CD4-positive, alpha-beta T cell (primary cell): ENCODE measurements at regions of chr5 and their contacts with region 1.

Region 1: DNA sequence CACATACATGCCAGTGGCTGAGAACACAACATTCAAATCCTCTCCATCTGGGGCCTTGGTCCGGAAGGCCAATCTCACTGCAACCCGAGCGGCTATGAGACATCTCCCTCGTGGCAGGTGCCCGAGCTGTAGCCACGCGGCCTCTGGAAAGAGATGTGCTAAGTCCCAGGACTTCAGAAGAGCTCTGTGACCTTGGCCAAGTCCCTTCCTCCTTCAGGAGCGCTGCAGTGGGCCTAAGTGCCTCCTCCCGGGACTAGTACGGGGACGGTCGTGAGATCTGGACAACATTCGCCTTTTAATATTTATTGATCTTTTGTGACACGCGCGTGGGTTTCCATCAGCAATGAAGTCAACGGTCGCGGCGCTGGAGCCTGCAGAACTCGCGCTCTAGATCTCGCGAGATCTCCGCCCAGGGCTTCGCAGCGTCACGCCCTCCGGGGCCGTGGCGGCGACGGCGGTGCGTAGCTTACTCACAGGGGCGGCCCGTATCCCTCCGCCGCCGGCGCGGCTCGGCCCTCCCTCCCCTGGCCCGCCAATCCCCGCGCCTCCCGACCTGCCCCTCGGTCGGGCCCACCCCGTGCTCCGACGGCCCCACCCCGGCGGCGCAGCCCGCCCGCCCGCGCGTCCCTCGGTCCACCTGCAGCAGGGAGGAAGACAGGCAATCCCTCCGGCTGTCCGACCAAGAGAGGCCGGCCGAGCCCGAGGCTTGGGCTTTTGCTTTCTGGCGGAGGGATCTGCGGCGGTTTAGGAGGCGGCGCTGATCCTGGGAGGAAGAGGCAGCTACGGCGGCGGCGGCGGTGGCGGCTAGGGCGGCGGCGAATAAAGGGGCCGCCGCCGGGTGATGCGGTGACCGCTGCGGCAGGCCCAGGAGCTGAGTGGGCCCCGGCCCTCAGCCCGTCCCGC is at the start of gene UBE2D2:
- DNase-seq: peak; percentile 96 to 100 (median 98)
- ATAC-seq: peak; percentile 78
- H3K4me3 ChIP-seq: peak within 1 kb of the TSS; percentile 79
- H3K4me3 Mint-ChIP-seq: peak within 1 kb of the TSS; percentile 99
- H3K27ac ChIP-seq: peak within 1 kb of the TSS; percentile 85 to 88
- H3K27ac Mint-ChIP-seq: peak within 1 kb of the TSS; percentile 92
- H3K4me1 ChIP-seq: peaks cover 36% of the 10 kb centered on the region
- H3K4me1 Mint-ChIP-seq: peaks cover 44% of the 10 kb centered on the region
- H3K27me3 ChIP-seq: no peaks in the 10 kb centered on the region
- H3K27me3 Mint-ChIP-seq: no peaks in the 10 kb centered on the region
- CTCF ChIP-seq: no peak
- total RNA-seq, gene UBE2D2: 164 to 174 TPM

Region 2: DNA sequence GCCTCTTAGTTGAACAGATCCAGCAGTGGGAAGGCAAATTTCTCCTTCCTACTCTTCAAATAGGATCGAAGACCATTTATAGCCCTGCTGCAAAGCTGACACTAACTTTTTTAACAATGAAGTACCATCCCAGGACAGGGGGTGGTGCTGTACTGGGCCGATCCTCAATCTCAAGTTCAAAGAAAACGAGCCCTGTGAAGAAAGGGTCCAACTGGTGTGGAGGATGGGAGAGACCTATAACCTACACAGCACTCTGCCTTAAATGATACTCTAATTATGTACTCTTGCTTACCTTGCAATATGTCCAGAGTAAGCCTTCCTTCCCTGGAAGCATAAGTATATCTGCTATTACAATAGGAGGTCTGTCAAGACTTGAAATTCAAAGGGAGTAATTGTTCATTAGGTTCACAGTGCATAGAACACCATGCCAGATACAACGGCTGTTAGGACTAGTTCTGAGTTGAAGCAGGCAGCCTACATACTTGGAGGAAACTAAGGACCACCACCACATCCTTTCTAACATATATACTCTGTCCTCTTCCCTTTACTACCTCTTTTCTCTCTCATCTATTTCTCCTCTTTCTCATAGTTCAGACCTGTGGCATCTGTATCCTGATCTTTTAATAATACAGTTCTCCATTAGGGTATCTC is 1024.2 kb before region 1 on chr5:
- CTCF ChIA-PET with region 1: no interaction called
- POLR2A ChIA-PET with region 1: no interaction called
- intact Hi-C with region 1: no loop called
- DNase-seq: peak in 3 of 14 experiments; percentile 23 to 54 (median 45)
- ATAC-seq: peak; percentile 82
- H3K4me3 ChIP-seq: no peak overlapping the region
- H3K4me3 Mint-ChIP-seq: no peak overlapping the region
- H3K27ac ChIP-seq: no peak overlapping the region
- H3K27ac Mint-ChIP-seq: peak overlapping the region; percentile 5
- H3K4me1 ChIP-seq: peaks cover 12% of the 10 kb centered on the region
- H3K4me1 Mint-ChIP-seq: peaks cover 82% of the 10 kb centered on the region
- H3K27me3 ChIP-seq: no peaks in the 10 kb centered on the region
- H3K27me3 Mint-ChIP-seq: no peaks in the 10 kb centered on the region
- CTCF ChIP-seq: no peak

Region 3: DNA sequence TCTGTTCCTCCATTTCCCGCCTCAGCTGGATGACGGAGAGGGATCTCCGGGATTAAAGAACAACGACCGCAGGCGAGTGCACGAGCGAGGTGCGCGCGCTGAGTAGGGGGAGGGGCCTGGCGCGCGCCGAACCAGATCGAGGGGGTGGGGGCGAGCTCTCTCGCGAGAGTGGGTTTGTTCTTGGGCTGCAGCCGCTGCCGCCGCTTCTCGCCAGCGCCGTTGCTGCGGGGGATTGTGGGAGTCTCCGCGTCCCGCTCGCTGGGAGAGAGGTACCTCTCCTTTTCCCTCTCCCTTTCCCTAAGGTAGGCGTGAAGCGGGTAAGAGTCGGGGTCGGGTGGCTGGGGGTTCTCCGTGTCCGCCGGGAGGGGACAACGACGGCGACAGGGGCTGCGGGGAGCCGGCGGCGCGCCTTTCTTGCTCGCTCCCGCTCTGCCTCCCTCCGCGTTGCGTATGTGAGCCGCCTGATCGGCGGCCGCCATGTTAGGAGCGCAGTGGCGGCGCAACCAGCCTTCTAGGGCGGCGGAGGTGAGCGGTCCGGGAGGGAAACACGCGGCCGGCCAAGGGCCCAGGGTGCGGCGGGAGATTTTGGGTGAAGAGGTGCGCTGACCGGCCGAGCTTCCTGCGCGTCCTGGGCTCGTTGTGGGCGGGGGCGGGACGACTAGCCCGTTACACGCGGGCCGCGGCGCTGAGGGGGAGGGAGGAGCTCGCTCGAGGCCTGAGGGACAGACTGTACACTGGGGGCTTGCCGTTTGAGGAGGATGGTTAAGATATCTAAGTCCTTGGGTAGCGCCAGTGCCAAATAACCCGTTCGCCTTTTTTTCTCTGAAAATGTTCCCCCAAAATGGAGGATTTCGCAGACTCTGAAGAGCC is 267.3 kb before region 1 on chr5 and contains the start of gene MATR3:
- CTCF ChIA-PET with region 1: no interaction called
- POLR2A ChIA-PET with region 1: interaction called, 7 read pairs
- intact Hi-C with region 1: loop called in 1 of 2 experiments (anchors 5 kb)
- DNase-seq: peak; percentile 88 to 96 (median 92)
- ATAC-seq: peak; percentile 89
- H3K4me3 ChIP-seq: peak within 1 kb of the TSS; percentile 95
- H3K4me3 Mint-ChIP-seq: peak within 1 kb of the TSS; percentile 99
- H3K27ac ChIP-seq: peak within 1 kb of the TSS; percentile 98 to 100
- H3K27ac Mint-ChIP-seq: peak within 1 kb of the TSS; percentile 99
- H3K4me1 ChIP-seq: peaks cover 27% of the 10 kb centered on the region
- H3K4me1 Mint-ChIP-seq: peaks cover 52% of the 10 kb centered on the region
- H3K27me3 ChIP-seq: no peaks in the 10 kb centered on the region
- H3K27me3 Mint-ChIP-seq: no peaks in the 10 kb centered on the region
- CTCF ChIP-seq: no peak
- total RNA-seq, gene MATR3: 376 to 401 TPM

Region 4: DNA sequence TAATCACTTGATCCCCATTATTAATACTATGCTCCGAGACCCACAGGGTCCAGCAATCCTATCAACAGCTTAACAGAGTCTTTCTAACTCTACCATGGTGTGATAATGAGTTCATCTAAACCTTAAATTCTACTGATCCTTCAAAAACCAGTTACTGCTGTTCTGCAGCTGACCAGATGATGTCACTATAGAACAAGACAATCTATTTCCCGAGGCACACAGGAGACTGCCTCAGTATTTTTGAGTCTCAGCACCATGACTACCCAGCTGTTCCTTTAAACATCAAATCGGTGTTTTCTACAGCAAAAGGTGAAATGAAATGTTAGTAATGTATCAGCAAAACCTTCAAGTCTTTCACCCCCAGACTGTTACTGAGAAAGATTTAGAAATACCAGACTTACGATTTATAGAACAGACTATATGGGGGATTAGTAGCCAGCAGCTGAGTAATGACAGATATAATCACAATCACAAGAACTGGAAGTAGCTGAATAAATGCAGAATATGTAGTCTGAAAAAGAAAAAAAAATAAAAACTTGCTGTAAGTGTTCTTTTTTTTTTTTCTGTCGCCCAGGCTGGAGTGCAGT is 138.6 kb before region 1 on chr5:
- CTCF ChIA-PET with region 1: interaction called, 4 read pairs
- POLR2A ChIA-PET with region 1: interaction called, 10 read pairs
- intact Hi-C with region 1: no loop called
- DNase-seq: peak in 10 of 14 experiments; percentile 28 to 87 (median 50)
- ATAC-seq: peak; percentile 99
- H3K4me3 ChIP-seq: no peak overlapping the region
- H3K4me3 Mint-ChIP-seq: no peak overlapping the region
- H3K27ac ChIP-seq: no peak overlapping the region
- H3K27ac Mint-ChIP-seq: peak overlapping the region; percentile 3
- H3K4me1 ChIP-seq: peaks cover 2% of the 10 kb centered on the region
- H3K4me1 Mint-ChIP-seq: peaks cover 14% of the 10 kb centered on the region
- H3K27me3 ChIP-seq: no peaks in the 10 kb centered on the region
- H3K27me3 Mint-ChIP-seq: no peaks in the 10 kb centered on the region
- CTCF ChIP-seq: peak; percentile 93

Region 5: DNA sequence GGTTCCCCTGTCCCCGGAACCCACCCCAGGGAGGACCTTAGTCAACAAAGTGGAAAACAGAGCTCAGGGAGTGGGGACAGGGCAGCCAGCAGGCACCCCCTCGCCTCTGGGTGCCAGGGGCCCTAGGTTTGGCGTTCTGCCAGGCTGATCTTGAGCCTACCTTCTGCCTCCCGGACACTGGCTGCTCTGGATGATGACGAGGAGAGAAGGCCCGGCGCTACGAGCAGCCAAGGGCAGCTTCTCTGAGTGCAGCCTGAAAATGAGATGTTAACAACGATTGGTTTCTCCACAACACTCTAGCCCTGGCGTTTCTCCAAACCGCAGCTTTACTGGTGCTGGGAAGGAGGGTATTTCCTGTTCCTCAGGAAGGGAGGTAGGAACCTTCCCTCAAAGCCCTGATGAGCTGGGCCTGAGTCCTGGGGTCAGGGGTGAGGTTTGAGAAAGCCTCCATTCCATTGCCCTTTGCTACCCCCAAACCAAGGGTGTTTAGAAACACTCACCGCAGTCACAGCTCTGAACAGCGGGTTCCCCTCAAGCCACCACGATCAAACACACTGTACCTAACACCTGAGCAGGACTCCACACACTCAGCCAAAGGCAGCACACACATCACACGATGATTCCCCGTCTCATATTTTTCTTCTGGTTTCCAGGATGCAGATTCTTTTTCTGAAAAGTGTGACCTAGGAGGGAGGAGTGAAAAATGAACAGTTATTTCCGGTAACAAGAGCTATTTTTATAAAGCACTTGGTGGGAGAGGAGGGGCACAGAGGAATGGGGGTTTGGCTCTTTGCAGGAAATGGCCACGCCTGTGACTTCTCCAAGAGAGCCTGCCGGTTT is 78.7 kb before region 1 on chr5 and contains the start of gene STING1:
- CTCF ChIA-PET with region 1: no interaction called
- POLR2A ChIA-PET with region 1: interaction called, 19 read pairs
- intact Hi-C with region 1: no loop called
- DNase-seq: peak; percentile 40 to 88 (median 60)
- ATAC-seq: peak; percentile 71
- H3K4me3 ChIP-seq: peak within 1 kb of the TSS; percentile 81
- H3K4me3 Mint-ChIP-seq: peak within 1 kb of the TSS; percentile 91
- H3K27ac ChIP-seq: peak within 1 kb of the TSS; percentile 82
- H3K27ac Mint-ChIP-seq: peak within 1 kb of the TSS; percentile 92
- H3K4me1 ChIP-seq: peaks cover 57% of the 10 kb centered on the region
- H3K4me1 Mint-ChIP-seq: peaks cover 37% of the 10 kb centered on the region
- H3K27me3 ChIP-seq: no peaks in the 10 kb centered on the region
- H3K27me3 Mint-ChIP-seq: no peaks in the 10 kb centered on the region
- CTCF ChIP-seq: no peak
- total RNA-seq, gene STING1: 155 to 168 TPM

Region 6: DNA sequence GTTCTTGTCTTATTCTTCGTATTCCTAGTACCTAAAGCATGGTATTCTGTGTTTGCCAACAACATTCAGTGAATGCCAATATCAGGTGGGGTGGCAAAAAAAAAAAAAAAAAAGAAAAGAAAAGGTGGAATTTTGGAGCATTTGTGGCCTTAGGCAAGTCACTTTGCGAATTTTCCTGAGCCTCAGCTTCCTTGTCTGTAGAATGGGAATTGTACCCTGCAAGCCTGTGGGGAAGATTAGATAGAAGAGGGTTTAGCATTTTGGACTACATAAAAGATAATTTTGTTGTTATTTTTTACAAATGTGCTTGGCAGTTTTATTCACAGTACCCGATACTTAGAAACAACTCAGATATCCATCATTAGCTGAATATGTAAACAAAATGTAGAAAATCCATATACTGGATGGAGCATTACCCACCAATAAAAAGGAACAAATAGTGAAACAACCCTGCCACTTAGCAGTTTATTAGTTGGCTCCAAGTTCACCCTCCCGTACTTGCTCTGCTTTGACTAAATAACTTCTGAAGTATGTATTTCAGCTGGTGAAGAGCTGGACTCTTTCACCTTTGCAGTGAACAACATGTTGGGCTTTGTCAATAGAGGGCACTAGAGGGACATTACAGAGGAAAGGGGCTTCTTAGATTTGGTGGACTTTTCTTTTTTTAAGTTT is 13.8 kb after region 1 on chr5:
- CTCF ChIA-PET with region 1: interaction called, 28 read pairs
- POLR2A ChIA-PET with region 1: interaction called, 145 read pairs
- intact Hi-C with region 1: loop called in 1 of 2 experiments (anchors 1 kb)
- DNase-seq: peak in 4 of 14 experiments; percentile 28 to 73 (median 66)
- ATAC-seq: peak; percentile 37
- H3K4me3 ChIP-seq: no peak overlapping the region
- H3K4me3 Mint-ChIP-seq: peak overlapping the region; percentile 53
- H3K27ac ChIP-seq: no peak overlapping the region
- H3K27ac Mint-ChIP-seq: peak overlapping the region; percentile 92
- H3K4me1 ChIP-seq: peaks cover 62% of the 10 kb centered on the region
- H3K4me1 Mint-ChIP-seq: peaks cover 77% of the 10 kb centered on the region
- H3K27me3 ChIP-seq: no peaks in the 10 kb centered on the region
- H3K27me3 Mint-ChIP-seq: no peaks in the 10 kb centered on the region
- CTCF ChIP-seq: peak; percentile 79

Region 7: DNA sequence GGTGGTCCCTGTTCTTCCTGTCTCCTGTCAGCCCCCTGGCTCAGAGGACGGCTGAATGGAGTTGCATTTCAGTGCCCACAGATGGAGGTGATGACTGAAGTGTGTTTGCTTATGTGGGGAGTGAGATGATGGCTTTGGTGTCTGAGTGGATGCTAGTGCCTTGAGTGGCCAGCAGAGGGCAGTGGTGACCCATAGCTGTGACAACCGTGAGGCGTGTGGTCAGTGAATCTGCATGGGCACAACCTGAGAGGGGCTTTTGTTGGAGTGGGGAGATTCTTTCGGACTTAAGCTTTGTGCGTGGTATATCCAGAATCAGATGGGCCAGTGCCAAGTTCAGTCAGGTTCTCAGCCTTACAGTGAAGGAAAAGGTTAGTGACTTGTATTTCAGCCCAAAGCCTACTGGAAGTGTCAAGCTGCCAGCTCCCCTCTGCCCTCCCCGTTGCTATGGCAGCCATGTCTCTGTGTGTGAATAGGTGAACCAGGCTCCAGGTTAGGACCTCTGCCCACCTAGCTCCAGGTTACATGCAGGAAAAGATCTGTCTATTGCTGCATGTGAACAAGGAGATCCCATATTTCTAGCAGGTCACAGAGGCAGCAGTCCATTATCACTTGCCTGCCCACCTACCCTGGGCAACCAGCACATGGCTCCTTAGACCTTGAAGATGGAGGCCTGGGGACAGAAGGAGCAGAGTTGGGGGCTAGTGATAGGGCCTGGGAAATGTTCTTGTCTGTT is 72.5 kb after region 1 on chr5:
- CTCF ChIA-PET with region 1: interaction called, 3 read pairs
- POLR2A ChIA-PET with region 1: interaction called, 21 read pairs
- intact Hi-C with region 1: no loop called
- DNase-seq: peak; percentile 39 to 87 (median 54)
- ATAC-seq: peak; percentile 47
- H3K4me3 ChIP-seq: no peak overlapping the region
- H3K4me3 Mint-ChIP-seq: no peak overlapping the region
- H3K27ac ChIP-seq: no peak overlapping the region
- H3K27ac Mint-ChIP-seq: no peak overlapping the region
- H3K4me1 ChIP-seq: peaks cover 49% of the 10 kb centered on the region
- H3K4me1 Mint-ChIP-seq: peaks cover 37% of the 10 kb centered on the region
- H3K27me3 ChIP-seq: no peaks in the 10 kb centered on the region
- H3K27me3 Mint-ChIP-seq: no peaks in the 10 kb centered on the region
- CTCF ChIP-seq: peak; percentile 89

Region 8: GRCh38 chr5:140113699-140114263 is 552.8 kb after region 1 on chr5 and contains the start of gene PURA:
- CTCF ChIA-PET with region 1: no interaction called
- POLR2A ChIA-PET with region 1: no interaction called
- intact Hi-C with region 1: loop called in 1 of 2 experiments (anchors 10 kb)
- DNase-seq: peak; percentile 95 to 98 (median 97)
- ATAC-seq: peak; percentile 93
- H3K4me3 ChIP-seq: peak within 1 kb of the TSS; percentile 84
- H3K4me3 Mint-ChIP-seq: peak within 1 kb of the TSS; percentile 100
- H3K27ac ChIP-seq: peak within 1 kb of the TSS; percentile 82 to 83
- H3K27ac Mint-ChIP-seq: peak within 1 kb of the TSS; percentile 96
- H3K4me1 ChIP-seq: peaks cover 40% of the 10 kb centered on the region
- H3K4me1 Mint-ChIP-seq: peaks cover 90% of the 10 kb centered on the region
- H3K27me3 ChIP-seq: peaks cover 8 to 10% of the 10 kb centered on the region in 2 experiments
- H3K27me3 Mint-ChIP-seq: peaks cover 6% of the 10 kb centered on the region
- CTCF ChIP-seq: no peak
- total RNA-seq, gene PURA: 7.0 to 7.9 TPM

Region 9: GRCh38 chr5:140607031-140607430 is 1046.0 kb after region 1 on chr5:
- CTCF ChIA-PET with region 1: no interaction called
- POLR2A ChIA-PET with region 1: no interaction called
- intact Hi-C with region 1: no loop called
- DNase-seq: no peak
- ATAC-seq: no peak
- H3K4me3 ChIP-seq: no peak overlapping the region
- H3K4me3 Mint-ChIP-seq: no peak overlapping the region
- H3K27ac ChIP-seq: no peak overlapping the region
- H3K27ac Mint-ChIP-seq: no peak overlapping the region
- H3K4me1 ChIP-seq: peaks cover 7% of the 10 kb centered on the region
- H3K4me1 Mint-ChIP-seq: peaks cover 7% of the 10 kb centered on the region
- H3K27me3 ChIP-seq: no peaks in the 10 kb centered on the region
- H3K27me3 Mint-ChIP-seq: peaks cover 13% of the 10 kb centered on the region
- CTCF ChIP-seq: no peak